Activated CD4-positive, alpha-beta memory T cell treated with anti-CD3 and anti-CD28 coated beads, Interleukin-2, amount 10 ng/mL, durations not matched to agents 7 days and 5 days (primary cell): ENCODE measurements at regions of chr6 and their contacts with region 1.

Region 1: GRCh38 chr6:26156076-26156849 is 69.0 kb downstream of the HFE start:
- DNase-seq: peak; percentile 91
- H3K4me3 Mint-ChIP-seq: peak overlapping the region; percentile 95
- H3K27ac Mint-ChIP-seq: peak overlapping the region; percentile 98
- H3K4me1 Mint-ChIP-seq: peaks cover 45% of the 10 kb centered on the region
- H3K27me3 Mint-ChIP-seq: no peaks in the 10 kb centered on the region

Region 2: GRCh38 chr6:26017632-26017966 is 138.7 kb before region 1 on chr6:
- CTCF ChIA-PET with region 1: interaction called, 3 read pairs
- POLR2A ChIA-PET with region 1: interaction called, 91 read pairs
- DNase-seq: peak; percentile 86
- H3K4me3 Mint-ChIP-seq: peak overlapping the region; percentile 74
- H3K27ac Mint-ChIP-seq: peak overlapping the region; percentile 96
- H3K4me1 Mint-ChIP-seq: peaks cover 39% of the 10 kb centered on the region
- H3K27me3 Mint-ChIP-seq: no peaks in the 10 kb centered on the region

Region 3: DNA sequence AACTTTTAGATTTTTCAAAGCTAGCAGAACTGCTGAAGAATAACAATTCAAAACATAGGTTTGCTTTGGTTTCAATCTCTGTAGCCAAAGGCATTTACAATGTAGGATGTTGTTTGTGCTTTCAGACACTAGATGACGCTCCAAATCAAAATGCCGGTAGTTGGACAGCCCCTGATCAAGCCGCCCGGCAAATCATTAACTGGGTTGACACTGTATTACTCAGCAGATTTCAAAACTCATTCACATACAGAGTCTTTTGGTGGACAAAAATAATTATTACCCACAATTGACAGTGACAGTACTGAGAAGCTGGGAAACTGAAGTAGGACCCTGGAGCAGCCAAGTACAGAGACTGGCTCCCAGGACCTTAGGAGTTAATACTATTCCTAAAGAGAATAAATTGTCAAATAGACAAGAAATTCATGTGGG is 90.3 kb before region 1 on chr6:
- CTCF ChIA-PET with region 1: no interaction called
- POLR2A ChIA-PET with region 1: interaction called, 83 read pairs
- DNase-seq: peak; percentile 64
- H3K4me3 Mint-ChIP-seq: no peak overlapping the region
- H3K27ac Mint-ChIP-seq: no peak overlapping the region
- H3K4me1 Mint-ChIP-seq: peaks cover 9% of the 10 kb centered on the region
- H3K27me3 Mint-ChIP-seq: peaks cover 29% of the 10 kb centered on the region

Region 4: GRCh38 chr6:26141378-26141904 is 14.8 kb before region 1 on chr6:
- CTCF ChIA-PET with region 1: interaction called, 4 read pairs
- POLR2A ChIA-PET with region 1: interaction called, 50 read pairs
- DNase-seq: no peak
- H3K4me3 Mint-ChIP-seq: no peak overlapping the region
- H3K27ac Mint-ChIP-seq: no peak overlapping the region
- H3K4me1 Mint-ChIP-seq: peaks cover 6% of the 10 kb centered on the region
- H3K27me3 Mint-ChIP-seq: no peaks in the 10 kb centered on the region

Region 5: DNA sequence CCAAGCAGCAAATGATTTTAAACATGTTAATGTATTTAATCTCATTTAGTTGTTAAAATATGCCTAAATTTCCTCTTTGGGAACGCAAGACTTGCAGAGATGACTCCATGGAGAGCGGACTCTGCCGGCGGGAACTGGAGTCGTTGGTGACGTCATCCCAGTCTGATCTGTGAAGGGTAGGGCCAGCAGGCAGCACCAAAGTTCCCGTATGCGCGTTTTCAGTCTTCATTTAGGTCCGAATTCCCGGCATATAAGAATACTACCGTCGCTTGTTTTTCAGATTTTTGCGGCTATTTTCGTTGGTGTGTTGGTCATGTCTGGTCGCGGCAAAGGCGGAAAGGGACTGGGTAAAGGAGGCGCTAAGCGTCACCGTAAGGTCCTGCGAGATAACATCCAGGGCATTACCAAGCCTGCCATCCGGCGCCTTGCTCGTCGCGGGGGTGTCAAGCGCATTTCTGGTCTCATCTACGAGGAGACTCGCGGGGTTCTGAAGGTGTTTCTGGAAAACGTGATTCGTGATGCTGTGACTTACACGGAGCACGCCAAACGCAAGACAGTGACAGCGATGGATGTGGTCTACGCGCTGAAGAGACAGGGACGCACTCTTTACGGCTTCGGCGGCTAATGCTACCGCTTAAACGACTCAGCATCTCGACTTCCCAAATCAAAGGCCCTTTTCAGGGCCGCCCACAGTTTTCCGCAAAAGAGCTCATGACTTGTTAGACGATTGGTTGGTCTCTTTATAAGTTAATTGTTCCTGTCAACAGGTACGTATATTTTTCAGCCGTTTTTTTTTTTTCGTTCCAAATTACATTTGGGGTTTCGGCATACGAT is 48.3 kb after region 1 on chr6:
- CTCF ChIA-PET with region 1: interaction called, 8 read pairs
- POLR2A ChIA-PET with region 1: interaction called, 1,293 read pairs
- DNase-seq: peak; percentile 90
- H3K4me3 Mint-ChIP-seq: no peak overlapping the region
- H3K27ac Mint-ChIP-seq: no peak overlapping the region
- H3K4me1 Mint-ChIP-seq: peaks cover 35% of the 10 kb centered on the region
- H3K27me3 Mint-ChIP-seq: no peaks in the 10 kb centered on the region

Region 6: DNA sequence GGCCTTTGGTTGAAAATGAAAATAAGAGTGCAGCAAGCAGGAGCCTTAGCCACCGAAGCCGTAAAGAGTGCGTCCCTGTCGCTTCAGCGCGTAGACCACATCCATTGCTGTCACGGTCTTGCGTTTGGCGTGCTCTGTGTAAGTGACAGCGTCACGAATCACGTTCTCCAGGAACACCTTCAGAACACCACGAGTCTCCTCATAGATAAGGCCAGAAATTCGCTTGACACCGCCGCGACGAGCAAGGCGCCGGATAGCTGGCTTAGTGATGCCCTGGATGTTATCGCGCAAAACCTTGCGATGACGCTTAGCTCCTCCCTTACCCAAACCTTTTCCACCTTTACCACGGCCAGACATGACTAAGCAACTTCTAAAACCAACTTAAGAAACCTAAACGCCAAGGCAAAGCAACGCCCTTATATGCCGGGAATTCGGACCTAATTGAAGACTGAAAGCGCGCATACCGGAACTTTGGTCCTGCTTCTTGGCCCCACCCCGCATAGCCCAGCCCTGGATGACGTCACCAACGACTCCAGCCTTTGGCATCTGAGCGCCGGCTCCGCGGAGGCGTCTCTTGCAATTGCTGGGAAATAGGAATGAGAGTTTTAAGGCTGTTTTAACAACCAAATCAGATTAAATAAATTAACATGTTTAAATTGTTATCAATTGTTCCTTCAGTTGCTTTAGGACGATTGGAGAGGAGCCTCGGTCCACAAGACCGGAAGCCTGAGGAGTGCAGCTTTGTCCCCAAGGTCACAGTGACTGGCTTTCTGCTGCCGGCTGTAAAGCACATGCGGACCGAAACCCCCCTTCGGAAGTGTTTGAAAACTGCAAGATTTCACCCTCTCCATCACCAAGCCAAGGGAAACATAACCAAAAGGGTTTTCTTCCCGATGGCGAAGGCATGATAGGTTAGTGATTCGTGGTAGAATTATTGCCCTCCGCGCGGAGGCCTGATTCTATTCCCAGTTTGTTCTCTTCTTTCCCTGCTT is 129.2 kb after region 1 on chr6:
- CTCF ChIA-PET with region 1: interaction called, 4 read pairs
- POLR2A ChIA-PET with region 1: interaction called, 91 read pairs
- DNase-seq: peak; percentile 98
- H3K4me3 Mint-ChIP-seq: peak overlapping the region; percentile 83
- H3K27ac Mint-ChIP-seq: peak overlapping the region; percentile 96
- H3K4me1 Mint-ChIP-seq: peaks cover 39% of the 10 kb centered on the region
- H3K27me3 Mint-ChIP-seq: peaks cover 4% of the 10 kb centered on the region

Region 7: GRCh38 chr6:27146706-27147505 is 990.6 kb after region 1 on chr6:
- CTCF ChIA-PET with region 1: no interaction called
- POLR2A ChIA-PET with region 1: interaction called, 44 read pairs
- DNase-seq: peak; percentile 87
- H3K4me3 Mint-ChIP-seq: no peak overlapping the region
- H3K27ac Mint-ChIP-seq: no peak overlapping the region
- H3K4me1 Mint-ChIP-seq: peaks cover 31% of the 10 kb centered on the region
- H3K27me3 Mint-ChIP-seq: no peaks in the 10 kb centered on the region